BJ (cell line): ENCODE measurements at regions of chr14 and their contacts with region 1.

Region 1: DNA sequence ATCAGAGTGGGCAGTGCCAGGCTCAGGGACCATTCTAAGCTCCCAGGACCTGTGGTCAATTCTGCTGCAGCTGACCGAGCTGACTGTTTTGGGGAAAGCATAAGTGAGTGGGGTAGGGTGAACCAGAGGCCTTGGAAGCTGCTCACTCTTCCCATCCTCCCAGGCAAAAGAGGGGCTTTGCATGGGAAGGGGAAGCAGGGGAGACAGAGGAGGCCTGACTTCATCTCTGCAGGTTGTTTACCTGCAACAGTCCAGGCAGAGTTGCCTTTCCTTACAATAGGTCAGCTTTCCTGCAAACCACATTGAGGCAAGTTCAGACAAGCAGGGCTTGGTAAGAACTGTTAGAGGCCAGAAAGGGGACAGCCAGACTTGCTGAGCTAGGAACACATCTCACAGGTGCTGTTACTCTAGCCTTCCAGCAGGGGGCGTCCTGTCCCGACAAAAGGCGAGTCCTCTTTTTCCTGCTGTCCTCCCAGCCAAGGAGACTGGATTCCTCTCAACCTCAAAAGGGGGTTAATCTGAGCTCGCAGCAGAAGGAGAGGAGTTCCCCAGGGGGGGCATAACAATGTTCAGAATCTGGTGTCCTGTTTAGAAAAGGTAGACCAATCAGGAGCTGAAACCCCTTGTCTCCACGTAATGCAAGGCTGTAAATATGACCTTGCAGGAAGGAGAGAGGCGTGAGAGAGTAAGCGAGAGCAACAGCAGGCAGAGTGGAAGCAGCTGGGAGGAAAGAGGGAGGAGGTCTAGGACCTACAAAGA is 4.3 kb upstream of the DHRS2 start:
- DNase-seq: no peak
- H3K4me3 ChIP-seq: no peak overlapping the region
- H3K27me3 ChIP-seq: peaks cover 5% of the 10 kb centered on the region; the same call in 1 of the 2 replicates
- CTCF ChIP-seq: peak; percentile 99

Region 2: GRCh38 chr14:23555882-23556699 is 75.8 kb before region 1 on chr14 and contains the start of gene THTPA:
- CTCF ChIA-PET with region 1: no interaction called
- POLR2A ChIA-PET with region 1: no interaction called
- DNase-seq: no peak
- H3K4me3 ChIP-seq: peak within 1 kb of the TSS; percentile 61
- H3K27me3 ChIP-seq: no peaks in the 10 kb centered on the region
- CTCF ChIP-seq: no peak
- polyA plus RNA-seq, gene THTPA: 8.1 and 14.2 TPM in 2 replicates

Region 3: GRCh38 chr14:23588884-23589598 is 42.8 kb before region 1 on chr14:
- CTCF ChIA-PET with region 1: interaction called, 15 read pairs
- POLR2A ChIA-PET with region 1: no interaction called
- DNase-seq: peak; percentile 13
- H3K4me3 ChIP-seq: no peak overlapping the region
- H3K27me3 ChIP-seq: no peaks in the 10 kb centered on the region
- CTCF ChIP-seq: peak; percentile 83

Region 4: DNA sequence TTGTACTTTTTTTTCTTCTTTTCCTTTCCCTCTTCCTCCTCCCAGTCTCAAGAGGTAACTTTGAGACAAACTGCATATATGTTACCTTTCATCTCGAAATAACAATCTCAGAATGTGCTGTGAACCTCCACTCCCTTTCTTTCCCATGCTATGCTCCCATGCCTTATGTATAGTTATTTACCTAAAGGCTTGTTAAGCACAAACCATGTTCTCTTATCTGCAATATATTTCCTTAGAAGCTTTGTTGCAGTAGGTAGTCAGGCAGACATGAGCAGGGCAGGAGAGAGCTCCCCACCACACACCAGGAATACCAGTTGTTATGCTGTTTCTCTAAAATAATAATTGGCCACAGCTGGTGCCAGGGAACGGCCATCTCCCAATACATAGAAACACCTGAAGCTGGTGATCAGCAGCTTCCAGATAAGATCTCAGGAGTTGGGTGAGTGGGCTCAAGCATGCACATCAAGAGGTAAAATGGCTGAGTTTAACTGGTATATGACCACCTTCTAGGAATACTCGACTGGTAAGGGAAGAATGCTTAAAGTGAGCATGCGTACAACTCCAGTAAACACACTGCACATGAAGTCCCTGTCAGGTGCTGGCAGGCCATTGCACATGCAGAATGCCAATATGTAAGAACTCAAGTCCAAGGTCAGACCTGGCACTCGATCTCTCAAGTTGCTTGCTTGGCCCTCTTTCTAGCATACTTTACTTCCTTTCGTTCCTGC is 10.5 kb before region 1 on chr14:
- CTCF ChIA-PET with region 1: interaction called, 20 read pairs
- POLR2A ChIA-PET with region 1: no interaction called
- DNase-seq: no peak
- H3K4me3 ChIP-seq: no peak overlapping the region
- H3K27me3 ChIP-seq: no peaks in the 10 kb centered on the region
- CTCF ChIP-seq: no peak

Region 5: GRCh38 chr14:23665375-23666192 is 33.7 kb after region 1 on chr14:
- CTCF ChIA-PET with region 1: interaction called, 13 read pairs
- POLR2A ChIA-PET with region 1: no interaction called
- DNase-seq: no peak
- H3K4me3 ChIP-seq: no peak overlapping the region
- H3K27me3 ChIP-seq: no peaks in the 10 kb centered on the region
- CTCF ChIP-seq: peak; percentile 71

Region 6: GRCh38 chr14:23916004-23916403 is 284.1 kb after region 1 on chr14:
- CTCF ChIA-PET with region 1: interaction called, 110 read pairs
- POLR2A ChIA-PET with region 1: interaction called, 13 read pairs
- DNase-seq: no peak
- H3K4me3 ChIP-seq: no peak overlapping the region
- H3K27me3 ChIP-seq: 0 out of 2 replicates have a peak, but pooled peaks cover 3% of the 10 kb centered on the region
- CTCF ChIP-seq: no peak

Region 7: GRCh38 chr14:23929822-23930294 is 298.0 kb after region 1 on chr14:
- CTCF ChIA-PET with region 1: interaction called, 39 read pairs
- POLR2A ChIA-PET with region 1: no interaction called
- DNase-seq: no peak
- H3K4me3 ChIP-seq: no peak overlapping the region
- H3K27me3 ChIP-seq: no peaks in the 10 kb centered on the region; the same call in 1 of the 2 replicates
- CTCF ChIP-seq: peak; percentile 96